AG04449 (cell line): ENCODE measurements at regions of chr11 and their contacts with region 1.

Region 1: GRCh38 chr11:36376888-36377758 is 81.0 kb downstream of the PRR5L start:
- DNase-seq: no peak
- H3K4me3 ChIP-seq: peak overlapping the region; percentile 83
- CTCF ChIP-seq: peak; percentile 80

Region 2: GRCh38 chr11:36363361-36364268 is 13.5 kb before region 1 on chr11:
- CTCF ChIA-PET with region 1: interaction called, 36 read pairs
- POLR2A ChIA-PET with region 1: interaction called, 5 read pairs
- DNase-seq: no peak
- H3K4me3 ChIP-seq: no peak overlapping the region
- CTCF ChIP-seq: no peak

Region 3: DNA sequence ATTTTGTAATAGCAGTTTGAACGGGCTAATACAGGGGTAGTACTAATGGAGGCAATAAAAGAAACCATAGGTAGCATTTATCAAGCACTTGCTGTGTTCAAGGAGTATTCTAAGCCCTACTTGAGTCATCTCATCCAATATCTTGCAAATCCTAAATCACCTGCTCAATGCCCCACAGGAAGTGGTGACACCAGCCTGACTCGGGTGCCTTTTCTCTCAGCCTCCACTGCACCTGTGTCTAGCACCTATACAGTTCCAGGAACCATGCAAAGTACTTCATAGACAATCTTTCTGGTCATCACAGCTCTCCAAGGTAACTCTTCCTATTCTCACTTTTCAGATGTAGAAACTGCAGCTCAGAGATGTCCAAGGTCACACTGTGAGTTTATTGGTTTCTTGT is 16.9 kb after region 1 on chr11:
- CTCF ChIA-PET with region 1: interaction called, 23 read pairs
- POLR2A ChIA-PET with region 1: no interaction called
- DNase-seq: no peak
- H3K4me3 ChIP-seq: no peak overlapping the region
- CTCF ChIP-seq: no peak

Region 4: GRCh38 chr11:36455658-36456111 is 78.6 kb after region 1 on chr11:
- CTCF ChIA-PET with region 1: interaction called, 9 read pairs
- POLR2A ChIA-PET with region 1: interaction called, 17 read pairs
- DNase-seq: peak; percentile 99
- H3K4me3 ChIP-seq: peak overlapping the region; percentile 2; the same call in 1 of the 2 replicates
- CTCF ChIP-seq: no peak